CD4-positive, alpha-beta memory T cell (primary cell): ENCODE measurements at regions of chr7 and their contacts with region 1.

Region 1: GRCh38 chr7:144050093-144050492 is 1.3 kb downstream of the OR2A5 start:
- DNase-seq: no peak
- H3K4me3 ChIP-seq: no peak overlapping the region
- H3K4me3 Mint-ChIP-seq: no peak overlapping the region
- H3K27ac ChIP-seq: no peak overlapping the region
- H3K27ac Mint-ChIP-seq: no peak overlapping the region
- H3K4me1 ChIP-seq: no peaks in the 10 kb centered on the region
- H3K4me1 Mint-ChIP-seq: no peaks in the 10 kb centered on the region
- H3K27me3 ChIP-seq: no peaks in the 10 kb centered on the region
- H3K27me3 Mint-ChIP-seq: peaks cover 10 to 13% of the 10 kb centered on the region in 2 donors

Region 2: DNA sequence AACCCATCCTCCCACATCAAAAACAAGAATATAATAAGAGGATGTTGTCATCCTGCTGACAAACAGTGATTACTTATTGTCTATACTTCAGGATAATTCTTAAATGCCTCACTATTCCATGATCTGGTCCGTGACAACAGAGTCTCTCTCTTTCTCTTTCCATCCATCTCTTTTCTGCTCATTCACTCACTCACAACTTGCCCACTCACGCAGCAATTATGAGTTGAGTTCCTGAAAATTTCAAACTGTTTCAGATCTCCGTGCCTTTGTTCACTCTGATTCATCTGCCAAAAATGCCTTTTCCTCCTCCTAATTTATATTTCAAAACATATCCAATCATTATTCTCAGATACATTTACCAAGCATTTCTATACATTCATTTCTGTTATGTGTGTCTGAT is 48.5 kb before region 1 on chr7:
- CTCF ChIA-PET with region 1: no interaction called
- POLR2A ChIA-PET with region 1: no interaction called
- intact Hi-C with region 1: loop called (anchors 2 kb)
- DNase-seq: no peak
- H3K4me3 ChIP-seq: no peak overlapping the region
- H3K4me3 Mint-ChIP-seq: no peak overlapping the region
- H3K27ac ChIP-seq: no peak overlapping the region
- H3K27ac Mint-ChIP-seq: no peak overlapping the region
- H3K4me1 ChIP-seq: no peaks in the 10 kb centered on the region
- H3K4me1 Mint-ChIP-seq: peaks cover 0 to 2% (median 0%) of the 10 kb centered on the region in 4 donors
- H3K27me3 ChIP-seq: no peaks in the 10 kb centered on the region
- H3K27me3 Mint-ChIP-seq: peaks cover 6 to 7% of the 10 kb centered on the region in 2 donors

Region 3: DNA sequence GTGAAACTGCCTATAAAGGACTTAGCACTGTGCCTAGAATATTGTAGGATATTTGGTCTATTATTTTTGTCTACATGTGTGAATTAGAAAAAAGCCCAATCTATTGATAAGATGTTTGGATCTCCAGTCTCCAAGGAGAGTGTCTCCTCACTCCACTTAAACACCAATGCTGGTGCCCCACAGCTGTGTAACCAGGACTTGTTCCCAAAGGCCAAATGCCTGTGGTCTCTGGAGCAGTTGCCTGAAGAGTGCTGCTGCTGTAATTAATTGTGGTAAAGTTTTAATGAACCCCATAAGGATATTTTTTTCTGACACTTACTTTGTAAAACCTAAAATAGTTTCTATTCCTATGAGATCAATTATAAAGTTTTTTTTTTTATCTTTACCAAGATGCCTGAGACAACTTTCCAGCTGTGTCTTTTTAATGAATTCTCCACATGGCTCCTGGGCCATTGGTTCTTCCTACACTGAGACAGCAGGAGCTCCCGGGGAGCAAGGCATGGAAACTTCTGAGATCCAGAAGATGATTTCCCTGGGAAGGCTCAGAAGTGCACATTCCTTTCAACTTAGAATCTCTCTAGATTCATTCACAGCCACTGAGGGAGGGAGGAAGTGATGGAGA is 12.6 kb before region 1 on chr7:
- CTCF ChIA-PET with region 1: no interaction called
- POLR2A ChIA-PET with region 1: no interaction called
- intact Hi-C with region 1: no loop called
- DNase-seq: no peak
- H3K4me3 ChIP-seq: no peak overlapping the region
- H3K4me3 Mint-ChIP-seq: no peak overlapping the region
- H3K27ac ChIP-seq: no peak overlapping the region
- H3K27ac Mint-ChIP-seq: no peak overlapping the region
- H3K4me1 ChIP-seq: no peaks in the 10 kb centered on the region
- H3K4me1 Mint-ChIP-seq: no peaks in the 10 kb centered on the region
- H3K27me3 ChIP-seq: peaks cover 6% of the 10 kb centered on the region
- H3K27me3 Mint-ChIP-seq: peaks cover 7 to 9% of the 10 kb centered on the region in 2 donors